ENCODE measurements at regions of chr10 and their contacts with region 1.

Region 1: DNA sequence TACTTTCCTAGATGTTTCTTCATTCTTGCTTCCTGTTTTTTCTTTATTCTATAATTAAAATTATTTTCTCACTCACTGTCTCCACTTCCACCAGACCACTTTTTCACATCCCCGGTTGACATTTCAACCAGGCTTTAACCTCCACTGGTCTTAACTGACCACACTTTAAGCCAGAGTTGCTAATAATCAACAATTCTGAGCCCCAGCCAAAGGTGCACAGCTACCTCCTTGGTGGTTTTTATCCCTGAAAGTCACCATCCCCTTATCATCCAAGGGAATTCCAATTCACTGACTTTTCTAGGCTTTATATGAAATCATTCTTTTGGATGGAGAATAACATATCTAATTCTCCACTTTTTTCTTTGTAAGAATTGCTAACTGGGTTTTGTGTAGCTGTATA is 138.9 kb downstream of the FRMD4A start:
- DNase-seq: no peak
- H3K4me3 ChIP-seq: no peak overlapping the region
- H3K27ac ChIP-seq: no peak overlapping the region
- H3K4me1 ChIP-seq: peaks cover 0 to 2% (median 0%) of the 10 kb centered on the region in 6 donors
- H3K27me3 ChIP-seq: peaks cover 0 to 12% (median 0%) of the 10 kb centered on the region in 7 donors
- CTCF ChIP-seq: no peak
- POLR2A ChIP-seq: no peak

Region 2: GRCh38 chr10:14478604-14479003 is 286.7 kb after region 1 on chr10:
- intact Hi-C with region 1: loop called (anchors 10 kb)
- DNase-seq: no peak
- H3K4me3 ChIP-seq: no peak overlapping the region
- H3K27ac ChIP-seq: no peak overlapping the region
- H3K4me1 ChIP-seq: no peaks in the 10 kb centered on the region
- H3K27me3 ChIP-seq: peaks cover 0 to 18% (median 0%) of the 10 kb centered on the region in 7 donors
- CTCF ChIP-seq: peak in 9 of 11 experiments; percentile 18 to 61 (median 47)
- POLR2A ChIP-seq: no peak

Measured in spleen (tissue), 13 donors.